CD4-positive, alpha-beta T cell (primary cell): ENCODE measurements at regions of chr9 and their contacts with region 1.

Region 1: DNA sequence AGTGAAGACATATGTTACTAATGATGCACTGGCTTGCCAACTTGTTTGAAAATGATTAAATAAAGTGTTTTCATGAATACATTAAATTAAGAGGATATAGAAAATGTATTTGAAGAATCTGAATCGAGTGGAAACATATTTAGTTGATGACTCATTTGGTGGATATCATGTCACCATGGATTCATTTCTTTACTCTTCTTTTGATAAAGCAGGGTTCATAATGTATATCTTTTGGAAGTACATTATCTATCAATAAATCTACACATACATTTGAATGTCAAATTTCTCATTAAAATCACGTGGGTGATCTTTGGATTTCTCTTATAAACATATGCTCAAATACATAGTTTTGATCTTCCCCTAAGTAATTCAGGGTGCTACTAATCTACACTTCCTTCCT is 1148.1 kb upstream of the ACO1 start:
- DNase-seq: no peak
- ATAC-seq: no peak
- H3K4me3 ChIP-seq: no peak overlapping the region
- H3K4me3 Mint-ChIP-seq: no peak overlapping the region
- H3K27ac ChIP-seq: no peak overlapping the region
- H3K27ac Mint-ChIP-seq: no peak overlapping the region
- H3K4me1 ChIP-seq: no peaks in the 10 kb centered on the region
- H3K4me1 Mint-ChIP-seq: peaks cover 22% of the 10 kb centered on the region
- H3K27me3 ChIP-seq: no peaks in the 10 kb centered on the region
- H3K27me3 Mint-ChIP-seq: no peaks in the 10 kb centered on the region
- CTCF ChIP-seq: no peak

Region 2: DNA sequence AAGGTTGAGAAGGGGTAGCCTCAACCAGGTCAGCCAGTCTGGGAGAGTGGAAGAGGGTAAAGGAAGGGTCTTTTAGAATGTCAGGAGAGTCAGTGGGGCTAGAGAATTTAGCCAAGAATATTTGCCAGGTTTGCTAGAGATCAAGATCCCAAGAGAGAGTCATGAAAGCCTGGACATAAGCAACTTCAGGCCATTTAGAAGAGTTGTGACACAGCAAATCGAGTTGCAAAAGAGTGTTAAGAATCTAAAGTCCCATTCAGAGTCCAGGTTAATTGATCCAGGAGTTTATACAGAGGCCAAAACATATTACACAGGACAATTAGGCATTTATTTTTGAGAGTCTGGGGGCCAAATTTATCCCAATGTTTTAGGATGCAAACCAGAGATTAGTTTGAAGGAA is 112.0 kb before region 1 on chr9:
- CTCF ChIA-PET with region 1: no interaction called
- POLR2A ChIA-PET with region 1: no interaction called
- intact Hi-C with region 1: no loop called
- DNase-seq: no peak
- ATAC-seq: no peak
- H3K4me3 ChIP-seq: no peak overlapping the region
- H3K4me3 Mint-ChIP-seq: no peak overlapping the region
- H3K27ac ChIP-seq: no peak overlapping the region
- H3K27ac Mint-ChIP-seq: no peak overlapping the region
- H3K4me1 ChIP-seq: no peaks in the 10 kb centered on the region
- H3K4me1 Mint-ChIP-seq: peaks cover 12% of the 10 kb centered on the region
- H3K27me3 ChIP-seq: no peaks in the 10 kb centered on the region
- H3K27me3 Mint-ChIP-seq: no peaks in the 10 kb centered on the region
- CTCF ChIP-seq: no peak

Region 3: DNA sequence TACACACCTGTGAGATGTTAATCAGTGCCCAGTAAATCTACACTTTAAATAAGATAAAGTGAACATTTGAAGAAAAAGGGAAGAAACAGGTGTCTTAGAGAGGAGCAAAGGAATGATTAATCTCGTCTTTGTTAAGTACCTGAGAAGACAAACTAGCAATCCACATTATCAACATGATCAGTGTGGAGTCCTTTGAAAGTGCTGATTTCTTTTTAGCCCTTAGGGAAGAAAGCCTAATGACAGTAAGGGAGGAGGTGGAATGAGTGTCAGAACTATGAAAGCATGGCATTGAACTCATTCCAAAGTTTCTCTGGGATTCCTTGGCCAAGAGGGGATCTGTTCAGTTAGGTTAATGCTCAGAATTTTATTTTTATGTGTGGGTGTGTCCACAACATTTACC is 39.1 kb after region 1 on chr9:
- CTCF ChIA-PET with region 1: no interaction called
- POLR2A ChIA-PET with region 1: no interaction called
- intact Hi-C with region 1: loop called in 1 of 2 experiments (anchors 5 kb)
- DNase-seq: no peak
- ATAC-seq: no peak
- H3K4me3 ChIP-seq: no peak overlapping the region
- H3K4me3 Mint-ChIP-seq: no peak overlapping the region
- H3K27ac ChIP-seq: no peak overlapping the region
- H3K27ac Mint-ChIP-seq: no peak overlapping the region
- H3K4me1 ChIP-seq: no peaks in the 10 kb centered on the region
- H3K4me1 Mint-ChIP-seq: peaks cover 25% of the 10 kb centered on the region
- H3K27me3 ChIP-seq: no peaks in the 10 kb centered on the region
- H3K27me3 Mint-ChIP-seq: no peaks in the 10 kb centered on the region
- CTCF ChIP-seq: no peak